ENCODE measurements at regions of chr19 and their contacts with region 1.

Region 1: GRCh38 chr19:19554074-19555023 is 16.3 kb downstream of the CILP2 start:
- DNase-seq: peak; percentile 84
- ATAC-seq: peak; percentile 86
- H3K4me3 Mint-ChIP-seq: no peak overlapping the region
- H3K27ac Mint-ChIP-seq: no peak overlapping the region
- H3K4me1 Mint-ChIP-seq: 0 out of 2 replicates have a peak, but pooled peaks cover 4% of the 10 kb centered on the region
- H3K27me3 Mint-ChIP-seq: no peaks in the 10 kb centered on the region
- CTCF ChIP-seq: peak; percentile 86

Region 2: GRCh38 chr19:19366612-19367396 is 187.5 kb before region 1 on chr19:
- CTCF ChIA-PET with region 1: interaction called, 15 read pairs
- POLR2A ChIA-PET with region 1: no interaction called
- DNase-seq: peak; percentile 85
- ATAC-seq: peak; percentile 97
- H3K4me3 Mint-ChIP-seq: peak overlapping the region; percentile 8; the same call in 1 of the 2 replicates
- H3K27ac Mint-ChIP-seq: peak overlapping the region; percentile 71
- H3K4me1 Mint-ChIP-seq: peaks cover 15% of the 10 kb centered on the region
- H3K27me3 Mint-ChIP-seq: no peaks in the 10 kb centered on the region
- CTCF ChIP-seq: peak; percentile 83

Region 3: DNA sequence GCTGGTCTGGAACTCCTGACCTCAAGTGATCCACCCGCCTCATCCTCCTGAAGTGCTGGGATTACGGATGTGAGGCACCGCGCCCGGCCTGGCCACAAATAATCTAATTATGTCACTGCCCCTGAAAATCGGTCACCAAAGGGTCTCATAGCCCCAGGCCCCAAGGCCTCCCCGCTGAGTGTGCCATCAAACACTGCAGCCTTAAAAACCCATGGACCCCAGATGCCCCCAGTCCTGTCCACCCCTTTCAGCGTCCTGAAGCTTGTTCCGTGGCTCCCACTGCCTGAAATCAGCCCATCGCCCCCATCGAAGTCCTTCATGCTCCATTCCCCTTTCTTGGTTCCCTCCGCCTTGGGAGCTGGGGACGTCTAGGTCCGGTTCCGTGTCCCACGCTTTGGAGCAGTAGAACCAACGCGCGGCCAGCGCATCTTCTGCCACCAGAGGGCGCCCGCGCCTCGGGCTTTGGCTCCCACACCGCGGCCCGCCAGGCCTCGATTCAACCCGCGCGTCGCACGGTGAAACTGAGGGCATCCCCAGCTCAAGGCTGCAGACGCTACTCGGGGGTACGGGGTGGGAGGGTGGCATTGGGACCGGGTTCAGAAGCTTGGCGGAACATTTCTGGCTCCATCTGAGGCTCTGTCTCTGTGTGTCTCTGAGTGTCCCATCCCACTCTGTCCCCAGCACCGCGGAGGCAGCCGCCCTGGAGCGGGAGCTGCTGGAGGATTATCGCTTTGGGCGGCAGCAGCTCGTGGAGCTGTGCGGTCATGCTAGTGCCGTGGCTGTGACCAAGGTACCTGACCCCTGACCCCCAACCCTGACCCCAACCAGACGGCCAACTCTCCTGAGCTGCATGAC is 22.2 kb before region 1 on chr19:
- CTCF ChIA-PET with region 1: interaction called, 408 read pairs
- POLR2A ChIA-PET with region 1: interaction called, 6 read pairs
- DNase-seq: peak; percentile 92
- ATAC-seq: peak; percentile 57
- H3K4me3 Mint-ChIP-seq: no peak overlapping the region
- H3K27ac Mint-ChIP-seq: no peak overlapping the region
- H3K4me1 Mint-ChIP-seq: peaks cover 21% of the 10 kb centered on the region
- H3K27me3 Mint-ChIP-seq: peaks cover 8% of the 10 kb centered on the region
- CTCF ChIP-seq: peak; percentile 92

Region 4: GRCh38 chr19:19568802-19569756 is 14.7 kb after region 1 on chr19:
- CTCF ChIA-PET with region 1: interaction called, 13 read pairs
- POLR2A ChIA-PET with region 1: no interaction called
- DNase-seq: no peak
- ATAC-seq: no peak
- H3K4me3 Mint-ChIP-seq: no peak overlapping the region
- H3K27ac Mint-ChIP-seq: no peak overlapping the region
- H3K4me1 Mint-ChIP-seq: no peaks in the 10 kb centered on the region
- H3K27me3 Mint-ChIP-seq: no peaks in the 10 kb centered on the region
- CTCF ChIP-seq: no peak

Region 5: DNA sequence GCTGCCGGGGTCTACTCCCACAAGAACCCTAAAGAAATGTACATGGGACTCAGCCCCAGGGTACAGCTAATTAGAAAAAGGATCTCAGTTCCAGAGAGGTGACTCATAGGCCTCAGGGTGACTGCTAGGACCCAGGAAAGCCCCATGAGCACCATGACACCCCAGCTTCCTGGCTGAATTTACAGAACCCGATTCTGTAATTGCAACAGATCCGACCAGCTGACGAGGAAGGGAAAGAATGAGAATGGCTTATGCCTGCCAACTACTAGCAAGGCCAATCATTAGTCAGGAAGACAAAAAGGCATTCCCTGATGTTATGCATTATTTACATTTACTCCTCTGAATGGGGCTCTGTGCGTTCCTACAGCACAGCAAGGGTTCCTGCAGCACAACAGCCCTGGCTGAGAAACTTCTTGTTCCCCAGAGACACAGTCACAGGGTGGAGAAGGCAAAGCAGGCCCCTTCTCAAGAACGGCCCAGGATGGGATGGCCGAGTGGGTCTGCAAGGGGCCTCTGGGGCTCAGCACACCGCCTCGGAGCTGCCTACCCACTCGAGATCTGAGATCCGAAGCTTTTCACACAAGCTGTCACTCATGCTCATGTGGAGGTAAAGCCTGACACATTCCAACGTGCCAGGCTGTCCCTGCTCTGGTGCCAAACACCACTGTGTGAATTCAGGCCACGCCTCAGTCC is 36.9 kb after region 1 on chr19:
- CTCF ChIA-PET with region 1: interaction called, 22 read pairs
- POLR2A ChIA-PET with region 1: no interaction called
- DNase-seq: peak; percentile 19
- ATAC-seq: peak; percentile 70
- H3K4me3 Mint-ChIP-seq: peak overlapping the region; percentile 19; the same call in 1 of the 2 replicates
- H3K27ac Mint-ChIP-seq: peak overlapping the region; percentile 93
- H3K4me1 Mint-ChIP-seq: peaks cover 22% of the 10 kb centered on the region
- H3K27me3 Mint-ChIP-seq: no peaks in the 10 kb centered on the region
- CTCF ChIP-seq: no peak

Region 6: DNA sequence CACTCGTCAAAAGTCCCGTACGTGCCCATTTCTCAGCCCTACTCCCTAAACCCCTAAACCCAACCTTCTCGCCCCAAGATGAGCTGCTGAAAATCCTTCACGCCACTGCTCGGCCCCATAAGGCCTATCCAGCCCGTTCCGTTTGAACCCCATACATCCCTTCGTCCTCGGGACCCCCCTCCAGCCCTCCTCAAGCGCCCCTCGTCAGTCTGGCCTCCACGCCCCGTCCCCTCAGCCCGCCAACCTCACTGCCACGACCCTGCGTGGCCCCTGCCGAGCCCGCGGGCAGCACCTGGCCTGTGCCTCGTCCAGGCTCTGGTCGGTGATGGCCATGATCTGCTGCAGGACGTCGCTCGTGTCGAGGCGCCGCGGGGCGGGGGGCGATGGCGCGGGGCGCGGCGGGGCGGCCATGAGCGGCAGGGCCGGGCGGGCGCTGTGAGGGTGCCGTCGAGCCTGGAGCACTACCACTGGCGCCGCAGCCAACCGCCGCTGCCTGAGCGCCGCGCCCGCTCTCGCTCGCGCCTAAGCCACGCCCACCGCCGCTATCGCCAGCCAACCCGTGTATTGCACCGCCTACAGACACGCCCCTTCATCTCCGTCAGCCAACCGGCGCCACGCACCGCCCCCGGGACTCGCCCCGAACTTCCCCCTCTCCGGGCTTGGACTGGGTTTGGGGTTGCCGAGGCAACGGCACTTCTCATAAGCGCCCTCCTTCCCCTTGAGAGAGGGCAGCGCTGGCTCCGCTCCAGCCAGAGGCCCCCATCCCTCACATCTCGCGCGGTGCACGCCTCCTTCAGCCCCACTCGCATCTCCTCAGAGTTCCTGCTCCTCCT is 64.1 kb after region 1 on chr19 and contains the start of gene PBX4:
- CTCF ChIA-PET with region 1: interaction called, 24 read pairs
- POLR2A ChIA-PET with region 1: interaction called, 4 read pairs
- DNase-seq: peak; percentile 99
- ATAC-seq: peak; percentile 98
- H3K4me3 Mint-ChIP-seq: peak within 1 kb of the TSS; percentile 73
- H3K27ac Mint-ChIP-seq: no peak within 1 kb of the TSS
- H3K4me1 Mint-ChIP-seq: peaks cover 13% of the 10 kb centered on the region
- H3K27me3 Mint-ChIP-seq: peaks cover 29% of the 10 kb centered on the region
- CTCF ChIP-seq: no peak
- total RNA-seq, gene PBX4: 3.2 to 4.5 TPM (median 3.5 TPM) in 3 replicates